Gastrocnemius medialis (tissue), 4 donors: ENCODE measurements at regions of chr6 and their contacts with region 1.

Region 1: DNA sequence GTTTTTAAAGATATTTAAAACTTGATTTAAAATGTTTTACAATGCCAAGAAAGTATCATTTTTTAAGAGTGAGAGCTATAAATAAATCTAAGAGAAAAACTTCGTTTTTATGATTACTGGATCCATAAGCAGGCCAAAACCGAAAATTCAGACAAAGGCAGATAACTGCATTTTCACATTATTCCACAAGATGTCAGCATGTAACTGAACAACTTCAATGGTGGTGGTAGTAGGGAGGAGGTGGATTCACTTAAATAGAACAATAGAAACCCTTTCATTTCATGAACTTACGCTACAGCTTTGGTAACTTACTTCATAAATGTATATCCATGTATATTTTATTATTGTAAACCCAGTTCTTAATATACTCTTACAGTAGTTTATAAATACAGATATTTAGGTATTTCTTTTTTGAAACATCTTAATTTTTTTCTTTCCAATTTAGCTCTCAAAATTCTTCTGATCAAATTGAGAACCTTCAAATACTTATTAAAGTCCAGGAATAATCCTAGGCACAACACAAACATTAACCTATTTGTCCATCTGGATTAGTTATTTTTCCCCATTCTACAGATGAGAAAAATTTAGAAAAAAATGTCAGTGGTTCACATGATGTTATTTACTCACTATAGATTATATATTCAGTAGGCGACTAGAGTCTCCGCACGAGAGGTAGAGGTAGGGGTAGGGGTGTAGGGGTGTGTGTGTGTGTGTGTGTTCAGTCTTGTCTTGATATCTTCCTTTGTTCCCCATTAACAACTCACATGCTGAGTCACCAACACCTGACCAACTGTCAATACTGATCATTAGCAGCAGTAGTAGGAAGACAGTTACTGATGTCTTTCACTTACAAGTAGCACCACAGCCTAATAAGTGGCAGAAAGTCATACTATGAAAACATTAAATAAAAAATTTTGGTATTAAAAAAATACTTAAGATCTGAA is 111.5 kb downstream of the ARHGAP18 start:
- DNase-seq: no peak
- ATAC-seq: peak; percentile 74 to 91
- H3K4me3 ChIP-seq: no peak overlapping the region
- H3K27ac ChIP-seq: peak overlapping the region in 1 of 4 donors; percentile 25
- H3K4me1 ChIP-seq: peaks cover 3 to 6% of the 10 kb centered on the region in 2 donors
- H3K27me3 ChIP-seq: no peaks in the 10 kb centered on the region
- CTCF ChIP-seq: peak; percentile 63 to 90 (median 84)
- POLR2A ChIP-seq: no peak

Region 2: DNA sequence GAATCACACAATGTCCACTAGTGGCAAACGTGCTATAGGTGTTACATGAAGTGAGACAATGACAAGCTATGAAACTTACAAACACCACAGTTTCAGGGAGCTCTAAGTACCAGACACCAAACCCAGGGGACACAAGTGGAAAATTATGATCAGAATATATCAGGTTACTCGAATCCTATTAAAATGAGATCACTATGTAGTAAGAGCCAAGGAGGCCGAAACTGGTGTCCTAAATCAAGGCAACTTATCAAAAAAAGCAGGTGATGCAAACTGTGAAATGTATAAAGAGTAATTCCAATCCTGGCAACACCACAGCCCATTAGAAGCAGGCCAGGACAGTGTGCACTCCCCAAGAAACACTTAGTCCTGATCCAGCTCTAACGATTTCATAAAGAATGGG is 11.1 kb after region 1 on chr6:
- in situ Hi-C with region 1: no loop called
- intact Hi-C with region 1: no loop called
- DNase-seq: no peak
- ATAC-seq: peak; percentile 62 to 68
- H3K4me3 ChIP-seq: no peak overlapping the region
- H3K27ac ChIP-seq: peak overlapping the region; percentile 29 to 57 (median 44)
- H3K4me1 ChIP-seq: peaks cover 13 to 14% of the 10 kb centered on the region in 2 donors
- H3K27me3 ChIP-seq: no peaks in the 10 kb centered on the region
- CTCF ChIP-seq: no peak
- POLR2A ChIP-seq: no peak

Region 3: DNA sequence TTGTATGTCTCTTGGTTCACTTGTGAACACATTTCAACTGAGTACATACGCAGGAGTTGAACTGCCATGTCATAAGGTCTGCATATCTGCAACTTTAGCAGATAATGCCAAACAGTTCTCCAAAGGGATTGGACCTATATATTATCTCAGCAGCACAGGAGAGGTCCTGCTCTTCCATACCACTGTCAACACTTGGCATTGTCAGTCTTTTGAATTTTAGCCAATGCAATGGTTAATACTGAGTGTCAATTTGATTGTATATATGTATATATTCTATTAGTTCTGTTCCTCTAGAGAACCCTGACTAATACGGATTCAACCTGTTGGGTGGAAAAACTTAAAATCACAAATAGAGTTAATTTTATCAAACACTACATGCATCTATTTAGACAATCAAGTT is 137.6 kb after region 1 on chr6:
- in situ Hi-C with region 1: loop called in 3 of 4 experiments (anchors 5 to 10 kb)
- intact Hi-C with region 1: no loop called
- DNase-seq: no peak
- ATAC-seq: no peak
- H3K4me3 ChIP-seq: no peak overlapping the region
- H3K27ac ChIP-seq: no peak overlapping the region
- H3K4me1 ChIP-seq: peaks cover 0 to 2% of the 10 kb centered on the region in 2 donors
- H3K27me3 ChIP-seq: no peaks in the 10 kb centered on the region
- CTCF ChIP-seq: no peak
- POLR2A ChIP-seq: no peak

Region 4: DNA sequence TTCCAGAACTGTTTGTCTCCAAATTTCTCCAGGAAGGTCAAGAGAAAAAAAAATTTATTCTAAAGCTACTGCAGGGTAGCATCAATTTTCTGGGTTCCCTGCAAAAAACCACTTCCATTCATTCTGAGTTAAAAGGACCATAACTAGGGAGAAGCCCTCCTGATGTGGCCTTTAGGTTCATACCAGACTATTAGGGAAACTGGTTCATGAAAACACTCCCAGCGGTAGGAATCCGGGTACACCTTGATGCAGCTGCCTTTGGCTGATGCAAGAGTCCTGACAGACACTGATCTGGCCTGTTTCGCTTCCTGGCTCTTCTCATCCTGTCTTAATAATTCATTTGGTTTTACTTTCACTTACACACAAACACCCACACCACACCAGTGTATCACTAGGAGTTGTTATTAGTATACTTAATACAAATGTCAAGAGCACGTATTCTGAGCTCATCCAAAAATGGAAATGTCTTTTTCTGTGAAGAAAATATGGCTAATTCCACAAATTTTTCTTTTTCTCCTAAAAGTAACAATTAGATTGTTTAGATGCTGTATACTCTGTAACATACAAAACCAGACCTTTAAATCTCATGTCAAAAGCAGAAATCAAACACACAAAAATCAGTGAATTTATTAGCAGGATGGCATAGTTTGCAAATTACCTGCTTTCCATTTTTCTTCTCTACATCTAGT is 149.8 kb after region 1 on chr6:
- in situ Hi-C with region 1: loop called in 1 of 4 experiments (anchors 10 kb)
- intact Hi-C with region 1: no loop called
- DNase-seq: peak; percentile 10 to 50
- ATAC-seq: peak in 1 of 2 donors; percentile 68
- H3K4me3 ChIP-seq: no peak overlapping the region
- H3K27ac ChIP-seq: peak overlapping the region; percentile 46 to 72 (median 62)
- H3K4me1 ChIP-seq: peaks cover 26 to 36% of the 10 kb centered on the region in 2 donors
- H3K27me3 ChIP-seq: no peaks in the 10 kb centered on the region
- CTCF ChIP-seq: peak in 2 of 5 experiments; percentile 23 to 33
- POLR2A ChIP-seq: no peak